ENCODE measurements at regions of chr19 and their contacts with region 1.

Region 1: DNA sequence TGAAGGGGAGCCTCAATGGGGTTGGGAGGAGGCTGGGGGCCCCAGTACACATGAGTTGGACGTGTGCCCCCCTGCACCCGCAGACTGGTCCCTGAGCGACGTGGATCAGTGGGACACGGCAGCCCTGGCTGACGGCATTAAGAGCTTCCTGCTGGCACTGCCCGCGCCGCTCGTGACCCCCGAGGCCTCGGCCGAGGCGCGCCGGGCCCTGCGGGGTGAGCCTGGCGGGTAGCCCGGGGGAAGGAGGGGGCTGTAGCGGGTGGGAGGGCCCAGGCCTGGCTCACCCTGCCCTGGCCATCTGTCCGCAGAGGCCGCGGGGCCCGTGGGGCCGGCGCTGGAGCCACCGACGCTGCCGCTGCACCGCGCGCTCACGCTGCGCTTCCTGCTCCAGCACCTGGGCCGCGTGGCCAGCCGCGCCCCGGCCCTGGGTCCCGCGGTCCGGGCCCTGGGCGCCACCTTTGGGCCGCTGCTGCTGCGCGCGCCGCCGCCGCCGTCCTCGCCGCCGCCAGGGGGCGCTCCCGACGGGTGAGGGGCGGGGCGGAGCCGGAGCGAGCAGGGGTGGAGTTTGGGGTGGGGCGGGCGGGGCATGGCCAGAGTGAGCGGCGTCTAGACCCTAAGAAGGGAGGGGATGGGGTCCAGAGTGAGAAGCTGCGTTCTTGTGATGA is 8.1 kb downstream of the PIK3R2 start:
- DNase-seq: peak; percentile 63 to 74
- H3K4me3 ChIP-seq: no peak overlapping the region
- H3K27ac ChIP-seq: peak overlapping the region; percentile 32 to 66 (median 45)
- H3K4me1 ChIP-seq: peaks cover 22 to 31% of the 10 kb centered on the region in 2 donors
- H3K27me3 ChIP-seq: no peaks in the 10 kb centered on the region
- CTCF ChIP-seq: peak in 4 of 6 experiments; percentile 20 to 99 (median 76)
- POLR2A ChIP-seq: peak in 1 of 2 donors; percentile 17

Region 2: GRCh38 chr19:18117692-18118378 is 43.3 kb before region 1 on chr19:
- intact Hi-C with region 1: loop called (anchors 5 kb)
- DNase-seq: peak; percentile 90 to 91
- H3K4me3 ChIP-seq: peak overlapping the region; percentile 14 to 53 (median 47)
- H3K27ac ChIP-seq: peak overlapping the region; percentile 25 to 66 (median 63)
- H3K4me1 ChIP-seq: peaks cover 16 to 18% of the 10 kb centered on the region in 2 donors
- H3K27me3 ChIP-seq: no peaks in the 10 kb centered on the region
- CTCF ChIP-seq: no peak
- POLR2A ChIP-seq: no peak

Region 3: GRCh38 chr19:18203863-18204393 is 42.8 kb after region 1 on chr19 and contains the start of gene RAB3A:
- intact Hi-C with region 1: loop called (anchors 5 kb)
- DNase-seq: peak; percentile 100
- H3K4me3 ChIP-seq: peak within 1 kb of the TSS; percentile 46 to 72 (median 63)
- H3K27ac ChIP-seq: peak within 1 kb of the TSS; percentile 93 to 99 (median 97)
- H3K4me1 ChIP-seq: peaks cover 17 to 19% of the 10 kb centered on the region in 2 donors
- H3K27me3 ChIP-seq: no peaks in the 10 kb centered on the region
- CTCF ChIP-seq: no peak
- POLR2A ChIP-seq: peak in 1 of 2 donors; percentile 74
- total RNA-seq, gene RAB3A: 0.40 to 2.5 (median 2.0) TPM in 3 of 4 donors, not detected in the other

Region 4: GRCh38 chr19:18629166-18630088 is 468.3 kb after region 1 on chr19:
- intact Hi-C with region 1: no loop called
- DNase-seq: peak in 1 of 2 donors; percentile 27
- H3K4me3 ChIP-seq: no peak overlapping the region
- H3K27ac ChIP-seq: peak overlapping the region; percentile 9 to 71 (median 17)
- H3K4me1 ChIP-seq: peaks cover 0 to 6% of the 10 kb centered on the region in 2 donors
- H3K27me3 ChIP-seq: no peaks in the 10 kb centered on the region
- CTCF ChIP-seq: no peak
- POLR2A ChIP-seq: no peak

Measured in thyroid gland (tissue), 4 donors.